Activated B cell treated with CpG ODN at 0.5 μM for 24 hours (primary cell): ENCODE measurements at regions of chr11 and their contacts with region 1.

Region 1: DNA sequence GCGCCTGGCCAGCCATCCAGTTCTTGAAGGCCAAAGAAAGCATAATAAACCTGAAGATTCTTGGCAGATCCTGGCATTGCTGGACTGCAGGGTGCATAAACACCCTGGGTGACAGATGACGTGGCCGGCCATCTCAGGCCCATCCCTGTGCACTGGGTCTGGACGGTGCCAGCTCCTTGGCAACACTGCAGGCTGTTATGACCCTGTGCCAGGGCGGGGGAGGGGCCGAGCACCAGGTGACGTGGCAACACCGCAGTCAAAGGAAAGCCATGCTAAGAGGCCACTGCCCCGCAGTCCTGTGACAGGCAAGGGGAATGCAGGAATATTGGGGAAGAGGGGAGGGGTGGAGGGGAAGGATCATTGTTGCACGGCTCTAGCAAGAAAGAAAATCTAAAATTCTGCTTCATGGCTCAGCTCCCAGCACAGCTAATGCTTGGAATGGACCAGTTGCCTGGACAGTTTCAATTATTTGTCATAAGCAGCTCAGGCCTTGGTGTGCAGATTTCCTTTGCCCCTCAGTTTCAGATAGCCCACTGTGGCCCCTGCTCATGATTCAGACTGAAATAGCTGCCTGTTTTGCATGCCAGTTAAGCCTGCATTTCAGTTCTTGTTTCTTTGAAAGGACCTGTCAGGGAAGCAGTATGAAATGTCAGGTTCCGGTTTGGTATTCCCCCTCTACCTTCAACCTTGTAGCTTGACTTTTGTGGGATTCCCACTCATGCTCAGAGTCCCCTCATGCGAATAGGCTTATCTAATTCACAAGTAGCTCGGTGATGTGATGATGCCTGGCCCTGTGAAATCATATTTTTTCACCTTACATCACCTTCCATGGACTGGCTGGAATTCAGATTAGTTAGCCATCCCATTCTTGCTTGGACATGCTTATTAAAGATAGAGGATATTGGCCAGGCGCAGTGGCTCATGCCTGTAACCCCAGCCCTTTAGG is 29.7 kb upstream of the DDX6 start:
- DNase-seq: peak; percentile 51
- ATAC-seq: peak; percentile 85
- H3K4me3 Mint-ChIP-seq: peak overlapping the region; percentile 77
- H3K27ac Mint-ChIP-seq: peak overlapping the region; percentile 97
- H3K4me1 Mint-ChIP-seq: peaks cover 73% of the 10 kb centered on the region
- H3K27me3 Mint-ChIP-seq: no peaks in the 10 kb centered on the region
- CTCF ChIP-seq: no peak

Region 2: DNA sequence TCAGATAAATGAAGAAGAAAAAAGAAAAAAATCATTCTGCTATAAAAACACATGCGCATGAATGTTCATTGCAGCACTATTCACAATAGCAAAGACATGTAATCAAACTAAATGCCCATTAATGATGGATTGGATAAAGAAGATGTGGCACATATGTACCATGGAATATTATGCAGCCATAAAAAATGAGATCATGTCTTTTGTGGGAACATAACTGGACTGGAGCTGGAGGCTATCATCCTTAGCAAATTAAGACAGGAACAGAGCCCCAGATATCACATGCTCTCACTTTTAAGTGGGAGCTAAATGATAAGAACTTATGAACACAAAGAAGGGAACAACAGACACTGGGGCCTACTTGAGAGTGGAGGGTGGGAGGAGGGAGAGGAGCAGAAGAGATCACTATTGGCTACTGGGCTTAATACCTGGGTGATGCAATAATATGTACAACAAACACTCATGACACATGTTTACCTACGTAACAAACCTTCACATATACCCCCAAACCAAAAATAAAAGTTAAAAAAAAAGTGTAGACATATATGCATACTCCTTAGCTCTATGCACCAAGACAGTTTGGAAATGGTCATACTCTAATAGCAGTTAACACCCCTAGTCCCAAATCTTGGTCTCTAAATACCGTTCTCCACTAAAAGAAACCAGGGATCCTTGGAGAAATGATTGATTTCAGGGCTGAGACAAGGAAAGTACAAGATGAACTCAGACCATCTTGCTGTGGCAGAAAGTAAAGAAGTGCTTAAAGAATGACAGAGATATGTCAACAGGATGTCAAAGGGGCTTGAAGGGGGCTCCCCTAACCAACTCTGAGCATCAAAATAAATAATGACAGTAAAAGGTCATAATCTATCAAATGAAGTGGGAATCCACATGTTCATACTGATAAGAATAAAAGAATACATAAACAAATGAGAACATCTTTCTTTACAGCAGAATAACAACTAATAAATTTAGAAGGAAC is 12.6 kb before region 1 on chr11:
- CTCF ChIA-PET with region 1: interaction called, 5 read pairs
- POLR2A ChIA-PET with region 1: interaction called, 12 read pairs
- intact Hi-C with region 1: loop called (anchors 1 kb)
- DNase-seq: no peak
- ATAC-seq: peak; percentile 47
- H3K4me3 Mint-ChIP-seq: peak overlapping the region; percentile 8
- H3K27ac Mint-ChIP-seq: peak overlapping the region; percentile 64
- H3K4me1 Mint-ChIP-seq: peaks cover 65% of the 10 kb centered on the region
- H3K27me3 Mint-ChIP-seq: no peaks in the 10 kb centered on the region
- CTCF ChIP-seq: no peak

Region 3: GRCh38 chr11:118845369-118845768 is 24.7 kb after region 1 on chr11:
- CTCF ChIA-PET with region 1: no interaction called
- POLR2A ChIA-PET with region 1: interaction called, 223 read pairs
- intact Hi-C with region 1: no loop called
- DNase-seq: no peak
- ATAC-seq: no peak
- H3K4me3 Mint-ChIP-seq: no peak overlapping the region
- H3K27ac Mint-ChIP-seq: peak overlapping the region; percentile 46
- H3K4me1 Mint-ChIP-seq: peaks cover 58% of the 10 kb centered on the region
- H3K27me3 Mint-ChIP-seq: no peaks in the 10 kb centered on the region
- CTCF ChIP-seq: no peak

Region 4: DNA sequence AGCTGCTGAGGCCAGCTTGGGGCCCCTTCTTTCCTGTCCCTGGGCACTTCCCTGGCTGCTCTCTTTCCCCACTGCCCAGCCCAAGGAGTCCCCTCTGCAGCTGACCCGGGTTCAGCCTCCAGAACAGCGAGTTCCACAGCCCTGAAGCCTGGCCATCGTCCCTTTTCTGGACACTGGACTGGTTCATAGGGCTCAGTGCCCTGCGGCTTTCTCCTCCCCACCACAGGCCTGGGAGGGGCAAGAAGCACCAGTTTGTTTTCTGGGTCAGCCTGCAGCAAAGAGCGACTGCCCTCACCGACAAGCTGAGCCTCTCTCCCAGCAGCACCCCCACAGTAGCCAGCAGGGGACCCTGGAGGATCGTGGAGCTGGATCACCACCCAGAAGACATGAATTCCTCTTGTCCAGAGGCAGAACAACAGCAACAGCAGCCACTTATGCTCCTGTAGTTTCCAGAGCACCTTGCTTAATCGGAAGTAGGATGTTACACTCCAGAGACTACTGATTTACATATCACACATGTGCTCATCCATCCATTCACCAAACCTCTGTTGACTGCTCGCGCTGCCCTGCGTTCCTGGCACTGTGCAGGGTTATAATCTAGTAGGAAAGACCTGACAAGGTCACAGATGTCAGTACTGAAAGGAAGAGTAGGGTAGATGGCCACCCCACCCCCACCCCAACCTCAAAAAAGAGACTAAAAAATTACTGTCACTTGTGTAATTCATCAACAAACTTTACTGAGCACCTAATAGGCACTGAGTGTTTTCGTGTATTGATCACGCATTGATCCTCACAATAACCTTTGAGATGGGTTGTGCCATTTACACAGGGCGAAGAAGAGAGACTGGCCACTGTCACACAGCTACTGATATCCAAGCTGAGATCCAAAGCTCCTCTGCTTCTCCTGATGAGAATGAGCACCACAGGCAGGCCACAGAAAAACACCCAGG is 50.0 kb after region 1 on chr11:
- CTCF ChIA-PET with region 1: interaction called, 17 read pairs
- POLR2A ChIA-PET with region 1: interaction called, 182 read pairs
- intact Hi-C with region 1: loop called (anchors 1 kb)
- DNase-seq: peak; percentile 54
- ATAC-seq: peak; percentile 56
- H3K4me3 Mint-ChIP-seq: peak overlapping the region; percentile 83
- H3K27ac Mint-ChIP-seq: peak overlapping the region; percentile 99
- H3K4me1 Mint-ChIP-seq: peaks cover 68% of the 10 kb centered on the region
- H3K27me3 Mint-ChIP-seq: no peaks in the 10 kb centered on the region
- CTCF ChIP-seq: no peak

Region 5: GRCh38 chr11:118895142-118896039 is 74.7 kb after region 1 on chr11:
- CTCF ChIA-PET with region 1: interaction called, 4 read pairs
- POLR2A ChIA-PET with region 1: interaction called, 38 read pairs
- intact Hi-C with region 1: no loop called
- DNase-seq: peak; percentile 62
- ATAC-seq: peak; percentile 70
- H3K4me3 Mint-ChIP-seq: peak overlapping the region; percentile 80
- H3K27ac Mint-ChIP-seq: peak overlapping the region; percentile 98
- H3K4me1 Mint-ChIP-seq: peaks cover 85% of the 10 kb centered on the region
- H3K27me3 Mint-ChIP-seq: no peaks in the 10 kb centered on the region
- CTCF ChIP-seq: no peak

Region 6: DNA sequence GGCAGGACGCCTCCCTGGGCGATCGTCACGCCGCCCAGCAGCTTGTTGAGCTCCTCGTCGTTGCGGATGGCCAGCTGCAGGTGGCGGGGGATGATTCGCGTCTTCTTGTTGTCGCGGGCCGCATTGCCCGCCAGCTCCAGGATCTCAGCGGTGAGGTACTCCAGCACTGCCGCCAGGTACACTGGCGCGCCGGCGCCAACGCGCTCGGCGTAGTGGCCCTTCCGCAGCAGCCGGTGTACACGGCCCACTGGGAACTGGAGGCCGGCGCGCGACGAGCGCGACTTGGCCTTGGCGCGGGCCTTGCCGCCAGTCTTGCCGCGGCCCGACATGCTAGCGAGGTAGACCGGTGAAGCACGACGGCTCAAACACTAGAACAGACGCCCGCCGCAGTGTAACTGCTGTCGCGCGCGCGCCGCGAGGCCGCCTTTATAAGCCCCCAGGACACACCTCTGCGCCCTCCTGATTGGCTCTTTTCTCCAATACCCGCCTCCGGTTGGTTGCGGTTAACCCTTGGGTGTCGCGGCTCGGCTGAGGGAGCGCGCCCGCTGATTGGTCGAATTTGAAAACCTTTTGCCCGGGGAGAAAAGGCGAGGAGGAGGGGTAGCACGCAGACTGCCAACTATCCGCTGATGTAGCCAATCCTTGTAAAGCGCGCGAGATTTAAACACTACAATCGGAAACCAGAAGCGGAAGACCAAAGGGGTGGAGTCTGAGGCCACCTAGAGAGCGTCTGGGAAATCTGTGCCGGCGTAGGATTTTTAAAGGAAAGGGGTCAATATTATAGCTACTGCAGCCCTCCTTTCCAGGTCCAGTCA is 274.6 kb after region 1 on chr11:
- CTCF ChIA-PET with region 1: no interaction called
- POLR2A ChIA-PET with region 1: no interaction called
- intact Hi-C with region 1: no loop called
- DNase-seq: peak; percentile 96
- ATAC-seq: peak; percentile 87
- H3K4me3 Mint-ChIP-seq: peak overlapping the region; percentile 92
- H3K27ac Mint-ChIP-seq: peak overlapping the region; percentile 89
- H3K4me1 Mint-ChIP-seq: peaks cover 50% of the 10 kb centered on the region
- H3K27me3 Mint-ChIP-seq: no peaks in the 10 kb centered on the region
- CTCF ChIP-seq: no peak